ENCODE measurements at regions of chr2 and their contacts with region 1.

Region 1: DNA sequence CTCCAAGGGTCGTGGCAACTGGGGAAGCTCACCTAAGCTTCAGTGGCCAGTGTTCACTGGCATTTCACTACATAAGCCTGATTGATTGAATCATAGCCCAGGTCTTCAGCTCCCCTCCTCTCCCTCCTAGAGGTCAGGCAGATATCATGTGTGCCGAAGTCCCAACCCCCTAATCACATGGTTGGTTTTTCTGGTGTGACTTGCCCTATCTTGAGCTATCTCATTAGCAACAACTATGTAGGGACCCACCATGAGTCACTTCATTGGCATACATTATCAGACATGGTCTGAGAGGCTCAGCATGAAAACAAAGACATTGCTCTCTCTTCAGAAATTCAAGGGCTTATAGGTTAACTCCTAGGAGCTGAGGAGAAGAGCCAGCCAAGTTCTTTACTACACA is 76.8 kb downstream of the LYPD1 start:
- DNase-seq: peak; percentile 18
- H3K4me3 ChIP-seq: no peak overlapping the region
- CTCF ChIP-seq: no peak

Region 2: GRCh38 chr2:132557694-132558093 is 35.5 kb before region 1 on chr2:
- in situ Hi-C with region 1: loop called (anchors 5 kb)
- DNase-seq: no peak
- H3K4me3 ChIP-seq: no peak overlapping the region
- CTCF ChIP-seq: no peak

Region 3: DNA sequence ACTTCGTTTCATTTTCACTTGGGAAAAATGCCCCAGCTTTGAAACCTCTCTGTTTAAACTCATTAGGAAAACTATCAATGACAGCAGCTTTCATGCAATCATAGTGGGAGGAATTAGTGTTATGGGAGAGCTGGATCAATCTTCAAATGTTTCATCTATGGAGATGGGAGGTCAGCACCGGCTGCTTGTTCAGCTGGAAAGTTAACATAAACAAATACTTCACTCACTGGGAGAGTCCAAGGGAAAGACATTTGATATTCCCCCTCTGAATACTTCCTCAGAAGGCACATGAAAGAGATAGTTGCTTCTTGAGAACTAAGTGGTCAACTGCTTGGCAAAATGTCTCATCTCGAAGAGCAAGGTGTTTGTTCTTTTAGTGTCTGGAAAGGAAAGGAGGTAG is 69.6 kb after region 1 on chr2:
- in situ Hi-C with region 1: no loop called
- DNase-seq: peak; percentile 50
- H3K4me3 ChIP-seq: no peak overlapping the region
- CTCF ChIP-seq: no peak

Region 4: DNA sequence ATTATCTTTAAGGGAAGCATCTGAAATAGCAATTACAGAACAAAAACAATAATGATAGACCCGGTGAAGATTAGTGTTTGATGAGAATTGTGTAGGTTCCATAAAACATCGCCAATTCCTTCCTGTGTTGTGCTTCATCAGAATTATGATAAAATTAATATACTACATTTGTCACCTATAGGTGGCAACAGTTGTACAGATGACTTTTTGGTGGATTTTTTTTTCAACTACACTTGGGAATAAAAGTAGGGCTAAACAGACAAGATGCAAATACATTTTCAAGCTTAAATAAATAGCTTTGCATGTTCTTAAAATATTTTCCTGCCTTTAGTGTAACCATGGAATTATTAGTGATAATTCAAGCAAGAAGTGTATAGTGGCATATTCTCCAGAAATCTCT is 83.8 kb after region 1 on chr2:
- in situ Hi-C with region 1: no loop called
- DNase-seq: no peak
- H3K4me3 ChIP-seq: no peak overlapping the region
- CTCF ChIP-seq: no peak